Common myeloid progenitor, CD34-positive (primary cell): ENCODE measurements at regions of chr1 and their contacts with region 1.

Region 1: GRCh38 chr1:9689011-9689706 is 37.6 kb downstream of the PIK3CD start:
- DNase-seq: peak; percentile 37 to 70 (median 59)
- H3K4me3 ChIP-seq: peak overlapping the region; percentile 23 to 80 (median 52)
- H3K27ac ChIP-seq: no peak overlapping the region
- H3K4me1 ChIP-seq: peaks cover 19 to 59% (median 55%) of the 10 kb centered on the region in 4 experiments
- H3K27me3 ChIP-seq: no peaks in the 10 kb centered on the region

Region 2: GRCh38 chr1:9705337-9706093 is 16.4 kb after region 1 on chr1:
- CTCF ChIA-PET with region 1: interaction called, 13 read pairs
- POLR2A ChIA-PET with region 1: interaction called, 3 read pairs
- DNase-seq: no peak
- H3K4me3 ChIP-seq: no peak overlapping the region
- H3K27ac ChIP-seq: no peak overlapping the region
- H3K4me1 ChIP-seq: peaks cover 0 to 24% (median 10%) of the 10 kb centered on the region in 4 experiments
- H3K27me3 ChIP-seq: no peaks in the 10 kb centered on the region